Heart right ventricle (tissue), 16 donors: ENCODE measurements at regions of chrX and their contacts with region 1.

Region 1: DNA sequence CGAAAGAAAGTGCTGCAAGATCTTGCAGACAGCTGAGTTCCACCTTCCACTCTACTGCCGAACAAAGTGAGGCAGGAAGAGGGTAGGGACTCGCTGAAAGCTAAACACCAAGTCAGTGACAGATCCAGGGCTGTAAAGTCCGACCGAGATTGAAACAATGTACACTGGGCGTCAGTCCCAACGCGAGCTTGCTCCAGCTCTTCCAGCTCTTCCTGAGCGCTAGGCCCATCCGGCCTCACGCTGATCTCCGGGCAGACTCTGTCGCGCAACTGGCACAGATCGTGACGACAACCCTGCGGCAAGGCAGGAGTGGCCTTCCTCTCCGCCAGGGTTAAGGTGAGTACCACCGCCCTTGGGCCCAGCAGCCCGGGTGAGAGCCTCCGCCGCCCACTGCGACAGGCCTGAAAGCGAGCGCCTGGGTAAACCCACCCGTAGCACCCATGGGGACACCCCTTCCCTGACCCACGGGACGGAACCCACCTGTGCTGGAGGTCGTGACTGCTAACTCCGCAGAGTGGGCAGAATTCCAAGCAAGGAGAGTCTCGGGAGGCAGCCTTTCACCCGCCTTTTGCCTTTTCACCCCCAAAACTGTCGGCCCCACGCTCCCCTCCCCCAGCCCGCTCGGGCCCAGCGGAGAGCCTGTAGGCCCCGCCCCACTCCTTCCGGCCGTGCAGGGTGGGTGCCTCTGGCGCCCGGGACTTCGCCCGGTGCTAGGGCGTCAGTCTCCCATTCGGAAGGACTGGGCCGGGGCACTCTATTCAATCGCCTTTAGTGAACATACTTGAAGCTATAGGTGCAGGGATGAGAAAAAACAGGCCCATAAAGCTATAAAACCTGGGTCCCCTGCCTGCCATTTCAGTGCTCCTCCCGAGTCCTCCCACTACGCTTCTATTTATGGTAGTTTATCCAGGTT is at the start of gene TMLHE:
- DNase-seq: peak; percentile 61 to 76
- ATAC-seq: peak; percentile 96 to 99 (median 98)
- H3K4me3 ChIP-seq: peak within 1 kb of the TSS; percentile 33 to 88 (median 68)
- H3K27ac ChIP-seq: peak within 1 kb of the TSS; percentile 84 to 96 (median 95)
- H3K4me1 ChIP-seq: peaks cover 0 to 17% (median 6%) of the 10 kb centered on the region in 9 donors
- H3K27me3 ChIP-seq: no peaks in the 10 kb centered on the region
- CTCF ChIP-seq: no peak
- total RNA-seq, gene TMLHE: 44.4 to 55.1 (median 48.4) TPM

Region 2: GRCh38 chrX:155682834-155683233 is 70.3 kb after region 1 on chrX:
- intact Hi-C with region 1: no loop called
- DNase-seq: no peak
- ATAC-seq: no peak
- H3K4me3 ChIP-seq: no peak overlapping the region
- H3K27ac ChIP-seq: no peak overlapping the region
- H3K4me1 ChIP-seq: no peaks in the 10 kb centered on the region
- H3K27me3 ChIP-seq: no peaks in the 10 kb centered on the region
- CTCF ChIP-seq: no peak

Region 3: GRCh38 chrX:155767051-155767875 is 154.7 kb after region 1 on chrX:
- intact Hi-C with region 1: loop called in 1 of 10 experiments (anchors 10 kb)
- DNase-seq: peak; percentile 41 to 73
- ATAC-seq: peak; percentile 82 to 96 (median 91)
- H3K4me3 ChIP-seq: peak overlapping the region in 9 of 10 donors; percentile 27 to 59 (median 55)
- H3K27ac ChIP-seq: peak overlapping the region in 9 of 10 donors; percentile 15 to 71 (median 62)
- H3K4me1 ChIP-seq: peaks cover 0 to 11% (median 0%) of the 10 kb centered on the region in 9 donors
- H3K27me3 ChIP-seq: peaks cover 0 to 8% (median 0%) of the 10 kb centered on the region in 7 donors
- CTCF ChIP-seq: no peak